Ascending aorta (tissue), 2 donors: ENCODE measurements at regions of chr3 and their contacts with region 1.

Region 1: DNA sequence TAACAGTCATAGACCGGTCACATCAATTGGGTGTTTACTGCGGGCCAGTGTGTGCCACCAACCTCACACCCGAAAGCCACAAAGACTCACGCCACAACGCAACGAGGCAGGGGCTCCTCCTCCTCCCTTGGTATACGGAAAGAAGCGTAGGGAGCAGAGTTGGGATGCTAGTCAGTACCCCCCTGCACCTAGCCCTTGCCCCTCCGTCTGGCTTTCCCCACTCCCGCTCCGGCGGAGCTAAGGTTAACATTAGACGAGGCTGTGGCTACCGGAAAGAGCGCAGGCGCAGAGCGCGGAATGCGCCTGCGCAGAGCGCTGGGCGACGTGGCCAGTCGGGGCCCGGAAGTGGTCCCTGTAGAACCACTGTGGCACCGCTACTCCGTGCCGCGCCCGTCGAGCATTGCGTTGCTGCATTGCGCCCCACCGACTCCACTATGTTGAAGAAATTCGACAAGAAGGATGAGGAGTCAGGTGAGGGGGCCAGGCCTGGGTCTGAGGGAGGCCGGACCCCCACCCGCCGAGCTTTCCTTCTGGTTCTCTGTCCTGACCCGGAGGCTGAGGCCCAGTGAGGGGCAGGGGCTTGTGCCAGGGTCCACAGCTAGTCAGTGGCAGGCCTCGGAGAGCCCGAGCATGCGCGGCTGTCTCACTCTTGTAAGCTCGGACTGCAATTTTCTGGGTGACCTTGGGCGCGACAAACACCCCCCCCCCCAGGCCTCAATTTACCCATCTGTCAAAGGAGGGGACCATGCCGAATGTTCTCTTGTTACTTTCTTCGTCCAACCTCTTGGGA is at the start of gene COPG1:
- DNase-seq: peak; percentile 53 to 93
- H3K4me3 ChIP-seq: peak within 1 kb of the TSS; percentile 78 to 93
- H3K27ac ChIP-seq: peak within 1 kb of the TSS; percentile 88 to 89
- H3K4me1 ChIP-seq: peaks cover 7 to 33% of the 10 kb centered on the region in 2 donors
- H3K27me3 ChIP-seq: no peaks in the 10 kb centered on the region
- CTCF ChIP-seq: no peak
- total RNA-seq, gene COPG1: 224 TPM

Region 2: DNA sequence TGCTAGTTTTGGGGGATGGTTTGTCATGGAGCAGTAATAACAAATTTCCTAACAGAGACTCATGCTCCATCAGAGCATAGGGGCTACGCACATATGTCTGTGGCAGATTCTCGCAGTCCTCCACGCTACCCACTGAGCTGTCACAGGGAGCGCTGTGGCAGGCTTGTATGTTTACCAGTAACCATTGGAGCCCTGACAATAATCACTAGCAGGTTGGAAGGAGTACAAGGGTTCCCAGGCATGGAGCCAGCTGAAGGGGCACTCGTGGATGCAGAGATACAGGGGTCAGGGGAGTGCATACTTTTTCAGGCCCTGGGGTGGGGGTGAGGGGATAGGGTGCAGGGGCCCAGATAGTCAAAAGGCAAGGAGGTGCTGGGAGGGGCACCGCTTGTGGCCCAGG is 196.8 kb before region 1 on chr3:
- intact Hi-C with region 1: loop called (anchors 1 kb)
- DNase-seq: no peak
- H3K4me3 ChIP-seq: no peak overlapping the region
- H3K27ac ChIP-seq: peak overlapping the region; percentile 55 to 75
- H3K4me1 ChIP-seq: peaks cover 0 to 22% of the 10 kb centered on the region in 2 donors
- H3K27me3 ChIP-seq: no peaks in the 10 kb centered on the region
- CTCF ChIP-seq: no peak

Region 3: GRCh38 chr3:129160891-129161859 is 88.3 kb before region 1 on chr3 and contains the start of gene ISY1:
- intact Hi-C with region 1: loop called (anchors 1 kb)
- DNase-seq: peak; percentile 47 to 93
- H3K4me3 ChIP-seq: peak within 1 kb of the TSS; percentile 79 to 97
- H3K27ac ChIP-seq: peak within 1 kb of the TSS; percentile 95 to 97
- H3K4me1 ChIP-seq: peaks cover 0 to 20% of the 10 kb centered on the region in 2 donors
- H3K27me3 ChIP-seq: no peaks in the 10 kb centered on the region
- CTCF ChIP-seq: peak; percentile 74 to 83 (median 80)
- total RNA-seq, gene ISY1: 22.5 TPM

Region 4: DNA sequence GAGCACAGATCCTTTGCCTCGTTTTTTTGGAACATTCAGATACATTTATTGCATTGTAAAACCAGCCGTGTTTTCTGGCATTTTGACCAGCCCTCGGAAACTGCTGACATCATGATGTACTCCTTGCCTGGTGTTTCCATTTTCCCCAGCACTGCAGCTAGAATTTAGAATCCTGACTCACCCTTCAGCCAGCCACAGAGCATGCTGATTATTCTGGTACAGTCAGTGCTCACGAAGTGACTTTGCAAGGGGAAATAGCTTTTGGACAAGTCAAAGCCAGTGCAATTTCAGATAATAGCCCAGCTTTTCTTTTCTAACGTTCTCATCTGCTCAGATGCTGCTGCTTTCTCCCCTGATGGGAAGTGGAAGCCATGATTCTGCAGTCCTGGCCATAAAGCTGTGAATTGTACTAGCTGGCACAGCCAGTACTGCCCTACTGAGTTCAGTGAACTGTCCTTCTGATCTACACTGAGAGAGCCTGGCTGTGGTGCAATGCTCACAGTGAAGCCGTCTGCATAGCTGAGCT is 53.7 kb before region 1 on chr3:
- intact Hi-C with region 1: loop called (anchors 5 kb)
- DNase-seq: peak; percentile 47 to 90
- H3K4me3 ChIP-seq: peak overlapping the region; percentile 19 to 46
- H3K27ac ChIP-seq: peak overlapping the region; percentile 62 to 82
- H3K4me1 ChIP-seq: peaks cover 0 to 12% of the 10 kb centered on the region in 2 donors
- H3K27me3 ChIP-seq: no peaks in the 10 kb centered on the region
- CTCF ChIP-seq: no peak

Region 5: GRCh38 chr3:129316131-129317013 is 66.9 kb after region 1 on chr3:
- intact Hi-C with region 1: loop called (anchors 2 kb)
- DNase-seq: peak in 1 of 2 donors; percentile 91
- H3K4me3 ChIP-seq: peak overlapping the region; percentile 82 to 87
- H3K27ac ChIP-seq: peak overlapping the region; percentile 89 to 90
- H3K4me1 ChIP-seq: peaks cover 5 to 18% of the 10 kb centered on the region in 2 donors
- H3K27me3 ChIP-seq: no peaks in the 10 kb centered on the region
- CTCF ChIP-seq: peak in 2 of 3 experiments; percentile 57 to 68